PC-9 (cell line): ENCODE measurements at regions of chr2 and their contacts with region 1.

Region 1: GRCh38 chr2:44342854-44343253 is 18.4 kb downstream of the PREPL start:
- DNase-seq: no peak
- H3K4me3 ChIP-seq: no peak overlapping the region
- H3K27ac ChIP-seq: no peak overlapping the region
- H3K4me1 ChIP-seq: no peaks in the 10 kb centered on the region
- H3K27me3 ChIP-seq: no peaks in the 10 kb centered on the region
- CTCF ChIP-seq: peak; percentile 73

Region 2: GRCh38 chr2:43960921-43961320 is 381.9 kb before region 1 on chr2:
- CTCF ChIA-PET with region 1: no interaction called
- POLR2A ChIA-PET with region 1: interaction called, 18 read pairs
- intact Hi-C with region 1: no loop called
- DNase-seq: no peak
- H3K4me3 ChIP-seq: no peak overlapping the region
- H3K27ac ChIP-seq: no peak overlapping the region
- H3K4me1 ChIP-seq: no peaks in the 10 kb centered on the region
- H3K27me3 ChIP-seq: no peaks in the 10 kb centered on the region
- CTCF ChIP-seq: no peak

Region 3: GRCh38 chr2:44275927-44276303 is 66.9 kb before region 1 on chr2:
- CTCF ChIA-PET with region 1: no interaction called
- POLR2A ChIA-PET with region 1: no interaction called
- intact Hi-C with region 1: no loop called
- DNase-seq: no peak
- H3K4me3 ChIP-seq: no peak overlapping the region
- H3K27ac ChIP-seq: no peak overlapping the region
- H3K4me1 ChIP-seq: no peaks in the 10 kb centered on the region
- H3K27me3 ChIP-seq: no peaks in the 10 kb centered on the region
- CTCF ChIP-seq: no peak

Region 4: DNA sequence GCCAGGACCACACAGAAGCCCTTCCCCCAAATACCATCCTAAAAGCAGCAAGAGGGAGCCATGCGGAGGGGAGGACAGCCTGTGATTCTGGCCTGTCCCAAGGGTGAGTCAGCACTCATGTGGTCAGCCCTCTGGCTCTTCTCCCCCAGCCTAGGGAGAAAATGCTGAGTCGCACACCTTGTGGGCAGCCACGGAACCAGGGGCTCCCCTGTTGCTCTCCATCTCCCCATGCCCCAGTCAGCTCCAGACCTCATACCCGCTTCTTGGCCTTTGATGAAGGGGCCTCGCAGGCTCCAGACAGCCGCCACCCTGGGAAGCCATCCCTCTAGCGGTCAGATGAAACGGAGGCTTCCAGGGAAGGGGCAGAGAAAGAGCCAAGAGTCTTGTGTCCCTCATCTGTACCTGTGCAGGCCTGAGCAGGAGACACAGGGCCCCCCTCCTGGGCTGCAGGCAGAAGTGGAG is 847.7 kb after region 1 on chr2:
- CTCF ChIA-PET with region 1: no interaction called
- POLR2A ChIA-PET with region 1: interaction called, 11 read pairs
- intact Hi-C with region 1: no loop called
- DNase-seq: no peak
- H3K4me3 ChIP-seq: no peak overlapping the region
- H3K27ac ChIP-seq: no peak overlapping the region
- H3K4me1 ChIP-seq: peaks cover 9% of the 10 kb centered on the region
- H3K27me3 ChIP-seq: no peaks in the 10 kb centered on the region
- CTCF ChIP-seq: no peak